HEK293 (cell line): ENCODE measurements at regions of chr18 and their contacts with region 1.

Region 1: DNA sequence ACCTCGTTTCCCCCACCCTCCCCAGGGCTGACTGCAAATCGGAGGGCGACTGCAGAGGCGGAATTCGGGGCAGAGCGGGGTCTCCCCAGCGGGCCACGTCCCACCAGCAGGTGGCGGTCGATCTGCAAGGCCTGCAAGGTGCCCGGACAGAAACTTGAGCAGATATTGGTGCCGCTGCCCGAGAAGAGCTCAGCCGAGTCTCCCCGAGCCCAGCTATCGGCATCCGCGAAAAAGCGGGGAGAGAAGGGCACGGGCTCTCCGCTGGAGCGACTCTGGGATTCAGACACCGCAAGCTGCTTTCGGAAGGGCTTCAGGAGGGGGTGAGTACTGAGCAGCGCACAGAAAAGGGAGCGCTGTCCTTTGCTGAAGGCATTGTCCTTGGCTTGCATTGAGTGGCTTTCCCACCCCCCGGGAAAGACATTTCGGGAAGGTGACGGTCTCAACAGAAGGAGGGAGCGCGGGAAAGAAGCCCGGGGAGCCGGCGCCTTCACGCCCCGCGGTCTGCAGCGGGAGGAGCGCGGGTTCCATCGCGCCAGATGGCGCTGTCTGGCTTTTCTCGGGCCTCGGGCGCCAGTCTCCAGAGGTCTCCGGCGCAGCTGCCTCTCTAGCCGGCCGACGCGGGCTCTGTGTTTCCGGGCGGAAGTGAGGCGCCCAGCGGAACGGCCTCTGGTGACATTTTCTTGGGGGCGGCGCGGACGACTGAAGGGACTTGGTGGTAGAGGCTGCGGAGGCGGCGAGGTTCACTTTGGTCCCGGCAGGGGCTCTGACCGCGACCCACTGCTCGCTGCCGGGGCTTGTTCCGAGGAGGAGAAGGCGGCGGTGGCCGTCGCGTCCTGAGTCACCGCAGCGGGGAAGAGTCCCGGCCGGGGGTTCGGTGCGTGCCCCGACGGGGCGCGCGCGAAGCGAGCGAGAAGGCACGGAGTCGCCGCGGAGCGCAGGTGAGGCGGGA is 69.5 kb downstream of the HAUS1 start:
- H3K4me3 ChIP-seq: peak overlapping the region; percentile 86
- H3K27ac ChIP-seq: peak overlapping the region; percentile 100
- H3K4me1 ChIP-seq: 0 out of 2 replicates have a peak, but pooled peaks cover 9% of the 10 kb centered on the region
- CTCF ChIP-seq: peak; percentile 93

Region 2: GRCh38 chr18:45962461-45962860 is 211.2 kb before region 1 on chr18:
- CTCF ChIA-PET with region 1: no interaction called
- POLR2A ChIA-PET with region 1: no interaction called
- H3K4me3 ChIP-seq: no peak overlapping the region
- H3K27ac ChIP-seq: no peak overlapping the region
- H3K4me1 ChIP-seq: no peaks in the 10 kb centered on the region; the same call in 1 of the 2 replicates
- CTCF ChIP-seq: no peak

Region 3: GRCh38 chr18:46155641-46156051 is 18.0 kb before region 1 on chr18:
- CTCF ChIA-PET with region 1: interaction called, 53 read pairs
- POLR2A ChIA-PET with region 1: interaction called, 16 read pairs
- H3K4me3 ChIP-seq: no peak overlapping the region
- H3K27ac ChIP-seq: no peak overlapping the region
- H3K4me1 ChIP-seq: peaks cover 8% of the 10 kb centered on the region
- CTCF ChIP-seq: no peak

Region 4: GRCh38 chr18:46199515-46200147 is 26.0 kb after region 1 on chr18:
- CTCF ChIA-PET with region 1: interaction called, 14 read pairs
- POLR2A ChIA-PET with region 1: interaction called, 8 read pairs
- H3K4me3 ChIP-seq: no peak overlapping the region
- H3K27ac ChIP-seq: peak overlapping the region; percentile 37; the same call in 1 of the 2 replicates
- H3K4me1 ChIP-seq: peaks cover 11% of the 10 kb centered on the region; the same call in 1 of the 2 replicates
- CTCF ChIP-seq: no peak

Region 5: DNA sequence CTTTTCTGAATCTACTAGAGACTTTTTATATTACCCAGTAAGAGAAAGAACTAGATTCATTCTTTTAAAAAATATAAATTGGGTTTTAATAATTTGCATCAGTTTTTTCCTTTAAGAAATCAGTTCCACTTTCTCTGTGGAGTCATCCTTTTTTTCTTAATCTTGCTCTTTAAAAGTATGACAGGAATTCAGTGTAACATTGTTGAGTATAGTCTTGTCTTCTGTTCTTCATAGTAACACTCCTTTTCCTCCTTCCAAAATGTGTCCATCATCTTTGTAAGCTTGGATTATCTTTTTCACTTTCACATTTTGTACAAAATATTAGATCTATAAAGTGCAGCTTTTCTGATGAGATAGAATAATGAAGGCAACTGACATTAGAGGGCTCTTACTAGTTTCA is 65.9 kb after region 1 on chr18:
- CTCF ChIA-PET with region 1: interaction called, 11 read pairs
- POLR2A ChIA-PET with region 1: no interaction called
- H3K4me3 ChIP-seq: no peak overlapping the region
- H3K27ac ChIP-seq: no peak overlapping the region
- H3K4me1 ChIP-seq: 0 out of 2 replicates have a peak, but pooled peaks cover 4% of the 10 kb centered on the region
- CTCF ChIP-seq: no peak

Region 6: DNA sequence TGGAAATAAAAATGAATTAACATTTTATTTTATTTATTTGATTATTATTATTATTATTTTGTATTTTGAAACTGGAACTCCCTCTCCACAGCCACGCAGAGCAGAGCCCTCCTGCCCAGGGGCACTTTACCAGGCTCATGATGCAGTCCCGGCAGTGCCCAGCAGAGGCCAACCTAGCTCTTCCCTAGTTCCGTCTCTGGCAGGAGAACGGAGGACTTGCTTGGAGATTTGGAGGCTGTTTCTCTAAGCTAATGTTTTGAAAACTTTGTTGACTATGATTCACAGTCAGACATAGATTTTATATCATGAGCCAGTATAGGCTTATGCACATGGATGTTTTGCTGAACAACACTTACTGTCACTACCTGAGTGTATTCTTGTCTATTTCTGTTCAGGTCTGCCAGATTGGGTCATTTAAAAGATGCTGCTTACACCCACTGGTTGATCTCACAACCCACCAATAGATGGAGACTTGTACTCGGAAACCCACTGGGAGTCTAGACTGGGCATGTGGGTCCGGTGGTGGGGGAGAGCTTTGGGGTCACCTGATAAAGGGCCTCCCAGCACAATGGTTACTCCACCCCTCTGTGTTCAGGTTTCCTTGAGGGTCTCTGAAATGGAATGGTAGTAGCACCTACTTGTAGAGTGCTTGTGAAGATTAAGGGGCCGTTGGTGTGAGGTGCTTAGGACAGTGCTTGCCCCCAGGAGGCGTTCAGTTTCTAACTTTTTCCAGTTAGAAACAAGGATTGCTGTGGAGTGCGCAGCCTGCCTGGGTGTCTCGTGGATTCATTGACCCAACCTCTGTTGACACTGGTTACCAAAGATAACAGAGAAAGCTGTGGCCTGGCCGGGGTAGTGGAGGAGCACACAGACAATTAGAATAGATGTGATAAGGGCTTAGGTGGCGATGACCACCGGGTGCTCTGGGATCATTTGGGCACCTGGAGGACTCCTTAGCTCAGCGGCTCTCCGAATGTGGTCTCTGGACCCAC is 107.8 kb after region 1 on chr18:
- CTCF ChIA-PET with region 1: interaction called, 79 read pairs
- POLR2A ChIA-PET with region 1: interaction called, 5 read pairs
- H3K4me3 ChIP-seq: no peak overlapping the region
- H3K27ac ChIP-seq: no peak overlapping the region
- H3K4me1 ChIP-seq: no peaks in the 10 kb centered on the region; the same call in 1 of the 2 replicates
- CTCF ChIP-seq: peak; percentile 44; the same call in 1 of the 2 replicates